Aorta (tissue), 5 donors: ENCODE measurements at regions of chr10 and their contacts with region 1.

Region 1: DNA sequence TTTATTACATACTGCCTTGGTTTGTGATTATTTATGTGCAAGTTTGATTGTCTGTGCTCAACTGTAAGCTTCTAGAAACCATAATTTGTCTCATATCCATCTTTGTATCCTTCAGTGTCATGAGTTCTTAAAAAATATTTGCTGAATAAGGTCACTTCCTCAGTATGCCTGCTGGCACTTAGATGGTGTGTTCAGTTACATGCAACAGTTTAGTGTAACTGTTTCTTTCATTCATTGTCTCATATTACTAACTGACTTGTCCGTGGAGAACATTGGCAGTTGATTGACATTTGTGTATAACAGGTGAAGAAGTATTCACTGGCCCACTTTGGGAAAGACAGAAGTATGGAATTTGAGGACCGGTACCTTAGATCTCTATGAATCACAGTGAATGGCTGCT is 236.9 kb downstream of the PRKG1 start:
- DNase-seq: no peak
- ATAC-seq: no peak
- H3K4me3 ChIP-seq: no peak overlapping the region
- H3K27ac ChIP-seq: no peak overlapping the region
- H3K4me1 ChIP-seq: peaks cover 14 to 28% of the 10 kb centered on the region in 2 donors
- H3K27me3 ChIP-seq: no peaks in the 10 kb centered on the region

Region 2: DNA sequence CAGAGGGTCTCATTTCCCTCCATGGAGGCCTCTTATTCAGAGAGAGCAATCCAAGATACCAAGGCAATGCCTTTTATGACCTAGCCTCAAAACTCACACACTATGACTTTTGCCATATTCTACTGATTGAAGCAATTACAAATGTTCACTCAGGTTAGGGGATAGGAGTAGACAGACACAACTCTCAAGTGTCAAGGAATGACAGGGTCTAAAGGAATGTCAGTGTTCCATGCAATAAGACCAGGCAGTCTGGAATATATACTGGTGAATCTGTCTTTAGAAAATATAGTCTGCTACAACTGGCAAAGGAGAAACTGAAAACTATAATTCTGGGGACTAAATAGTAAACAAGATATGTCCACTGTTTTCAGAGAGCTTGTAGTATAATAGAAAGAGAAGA is 47.0 kb after region 1 on chr10:
- intact Hi-C with region 1: loop called (anchors 5 kb)
- DNase-seq: no peak
- ATAC-seq: no peak
- H3K4me3 ChIP-seq: no peak overlapping the region
- H3K27ac ChIP-seq: no peak overlapping the region
- H3K4me1 ChIP-seq: peaks cover 0 to 3% of the 10 kb centered on the region in 2 donors
- H3K27me3 ChIP-seq: no peaks in the 10 kb centered on the region